T-cell (primary cell): ENCODE measurements at regions of chr6 and their contacts with region 1.

Region 1: GRCh38 chr6:127328043-127328609 is 15.3 kb downstream of the ECHDC1 start:
- DNase-seq: no peak
- ATAC-seq: no peak
- H3K4me3 ChIP-seq: no peak overlapping the region
- H3K4me3 Mint-ChIP-seq: no peak overlapping the region
- H3K27ac ChIP-seq: no peak overlapping the region
- H3K27ac Mint-ChIP-seq: no peak overlapping the region
- H3K4me1 ChIP-seq: no peaks in the 10 kb centered on the region
- H3K4me1 Mint-ChIP-seq: peaks cover 5 to 23% (median 7%) of the 10 kb centered on the region in 3 donors
- H3K27me3 ChIP-seq: no peaks in the 10 kb centered on the region
- H3K27me3 Mint-ChIP-seq: no peaks in the 10 kb centered on the region

Region 2: GRCh38 chr6:126199466-126199865 is 1128.7 kb before region 1 on chr6:
- CTCF ChIA-PET with region 1: no interaction called
- POLR2A ChIA-PET with region 1: no interaction called
- DNase-seq: peak in 1 of 35 experiments; percentile 5
- ATAC-seq: no peak
- H3K4me3 ChIP-seq: no peak overlapping the region
- H3K4me3 Mint-ChIP-seq: peak overlapping the region in 2 of 3 donors; percentile 6 to 52
- H3K27ac ChIP-seq: no peak overlapping the region
- H3K27ac Mint-ChIP-seq: no peak overlapping the region
- H3K4me1 ChIP-seq: no peaks in the 10 kb centered on the region
- H3K4me1 Mint-ChIP-seq: peaks cover 0 to 3% (median 0%) of the 10 kb centered on the region in 3 donors
- H3K27me3 ChIP-seq: no peaks in the 10 kb centered on the region
- H3K27me3 Mint-ChIP-seq: no peaks in the 10 kb centered on the region

Region 3: DNA sequence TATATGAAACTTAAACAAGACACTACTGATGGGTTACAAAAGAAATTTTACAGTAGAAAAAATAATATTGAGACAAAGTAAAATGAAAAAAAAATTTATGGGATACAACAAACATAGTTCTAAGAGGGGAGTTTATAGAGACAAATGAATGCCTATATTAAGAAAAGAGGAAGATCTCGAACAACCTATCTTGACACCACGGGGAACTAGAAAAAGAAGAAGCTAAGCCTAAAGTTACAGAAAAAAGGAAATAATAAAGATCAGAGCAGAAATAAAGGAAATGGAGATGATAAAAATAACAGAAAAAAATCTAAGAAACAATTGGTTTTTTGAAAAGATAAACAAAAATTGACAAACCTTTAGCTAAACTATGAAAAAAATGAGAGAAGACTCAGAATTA is 24.4 kb after region 1 on chr6:
- CTCF ChIA-PET with region 1: no interaction called
- POLR2A ChIA-PET with region 1: no interaction called
- DNase-seq: no peak
- ATAC-seq: no peak
- H3K4me3 ChIP-seq: no peak overlapping the region
- H3K4me3 Mint-ChIP-seq: no peak overlapping the region
- H3K27ac ChIP-seq: no peak overlapping the region
- H3K27ac Mint-ChIP-seq: no peak overlapping the region
- H3K4me1 ChIP-seq: no peaks in the 10 kb centered on the region
- H3K4me1 Mint-ChIP-seq: peaks cover 0 to 2% (median 0%) of the 10 kb centered on the region in 3 donors
- H3K27me3 ChIP-seq: peaks cover 0 to 2% of the 10 kb centered on the region in 2 experiments
- H3K27me3 Mint-ChIP-seq: no peaks in the 10 kb centered on the region

Region 4: GRCh38 chr6:127415096-127415495 is 87.0 kb after region 1 on chr6:
- CTCF ChIA-PET with region 1: no interaction called
- POLR2A ChIA-PET with region 1: no interaction called
- DNase-seq: no peak
- ATAC-seq: no peak
- H3K4me3 ChIP-seq: no peak overlapping the region
- H3K4me3 Mint-ChIP-seq: no peak overlapping the region
- H3K27ac ChIP-seq: no peak overlapping the region
- H3K27ac Mint-ChIP-seq: no peak overlapping the region
- H3K4me1 ChIP-seq: no peaks in the 10 kb centered on the region
- H3K4me1 Mint-ChIP-seq: no peaks in the 10 kb centered on the region
- H3K27me3 ChIP-seq: peaks cover 0 to 4% of the 10 kb centered on the region in 2 experiments
- H3K27me3 Mint-ChIP-seq: peaks cover 3 to 5% of the 10 kb centered on the region in 2 donors

Region 5: DNA sequence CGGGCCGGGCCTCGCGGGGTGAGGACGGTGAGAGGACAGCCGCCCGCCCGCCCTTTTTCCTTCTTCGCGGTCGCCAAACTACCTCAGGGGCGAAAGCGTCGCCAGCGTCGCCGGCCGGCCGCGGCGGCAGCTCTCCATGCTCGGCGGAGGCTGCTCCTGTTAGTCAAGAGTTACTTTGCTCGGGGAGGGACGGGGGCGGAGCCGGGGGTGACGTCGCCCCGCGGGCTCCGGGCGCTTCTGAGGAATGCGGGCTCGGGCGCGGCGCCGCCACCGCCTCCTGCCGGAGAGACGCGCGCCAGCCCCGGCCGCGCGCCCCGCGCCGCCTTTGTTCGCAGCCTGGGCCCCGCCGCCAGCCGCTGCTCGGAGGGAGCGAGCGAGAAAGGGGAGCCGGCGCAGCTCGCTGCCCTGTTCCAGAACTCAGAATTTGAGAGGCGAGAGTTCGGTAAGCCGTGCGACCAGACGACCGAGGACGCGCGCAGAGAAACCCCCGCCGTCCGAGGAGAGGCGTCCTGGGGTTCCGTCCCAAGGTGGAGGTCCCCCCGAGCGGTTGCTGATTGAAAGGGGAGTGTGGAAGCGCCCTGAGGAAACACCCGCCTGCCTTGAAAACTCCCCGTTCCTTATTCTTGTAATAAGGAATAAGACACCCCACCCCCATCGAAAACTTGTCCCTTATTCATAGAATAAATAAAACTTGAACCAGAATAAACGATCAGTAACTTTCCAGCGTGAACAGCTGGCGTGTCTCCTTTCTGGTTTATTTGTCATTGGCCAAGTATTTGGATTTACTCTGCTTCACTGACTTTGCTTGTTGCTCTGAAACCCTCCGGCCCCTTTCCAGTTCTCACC is 1192.5 kb after region 1 on chr6 and contains the start of gene PTPRK:
- CTCF ChIA-PET with region 1: no interaction called
- POLR2A ChIA-PET with region 1: interaction called in 1 of 2 experiments, 10 read pairs
- DNase-seq: peak; percentile 68 to 90 (median 83)
- ATAC-seq: peak; percentile 89 to 94 (median 92)
- H3K4me3 ChIP-seq: peak within 1 kb of the TSS; percentile 78 to 93
- H3K4me3 Mint-ChIP-seq: peak within 1 kb of the TSS; percentile 87 to 97 (median 90)
- H3K27ac ChIP-seq: no peak within 1 kb of the TSS
- H3K27ac Mint-ChIP-seq: peak within 1 kb of the TSS in 1 of 2 donors; percentile 73
- H3K4me1 ChIP-seq: peaks cover 2 to 24% of the 10 kb centered on the region in 2 experiments
- H3K4me1 Mint-ChIP-seq: peaks cover 22 to 23% (median 23%) of the 10 kb centered on the region in 3 donors
- H3K27me3 ChIP-seq: peaks cover 0 to 23% of the 10 kb centered on the region in 2 experiments
- H3K27me3 Mint-ChIP-seq: peaks cover 23 to 71% of the 10 kb centered on the region in 2 donors
- total RNA-seq, gene PTPRK: 2.1 to 11.1 (median 7.3) TPM